Colonic mucosa (tissue), 4 donors: ENCODE measurements at regions of chr4 and their contacts with region 1.

Region 1: GRCh38 chr4:42568610-42569207 is 88.2 kb downstream of the ATP8A1 start:
- DNase-seq: peak; percentile 74
- H3K4me3 ChIP-seq: no peak overlapping the region
- H3K27ac ChIP-seq: no peak overlapping the region
- H3K4me1 ChIP-seq: no peaks in the 10 kb centered on the region
- H3K27me3 ChIP-seq: no peaks in the 10 kb centered on the region
- CTCF ChIP-seq: peak; percentile 63

Region 2: GRCh38 chr4:42501624-42502401 is 66.9 kb before region 1 on chr4:
- intact Hi-C with region 1: no loop called
- DNase-seq: no peak
- H3K4me3 ChIP-seq: no peak overlapping the region
- H3K27ac ChIP-seq: no peak overlapping the region
- H3K4me1 ChIP-seq: no peaks in the 10 kb centered on the region
- H3K27me3 ChIP-seq: no peaks in the 10 kb centered on the region
- CTCF ChIP-seq: no peak

Region 3: DNA sequence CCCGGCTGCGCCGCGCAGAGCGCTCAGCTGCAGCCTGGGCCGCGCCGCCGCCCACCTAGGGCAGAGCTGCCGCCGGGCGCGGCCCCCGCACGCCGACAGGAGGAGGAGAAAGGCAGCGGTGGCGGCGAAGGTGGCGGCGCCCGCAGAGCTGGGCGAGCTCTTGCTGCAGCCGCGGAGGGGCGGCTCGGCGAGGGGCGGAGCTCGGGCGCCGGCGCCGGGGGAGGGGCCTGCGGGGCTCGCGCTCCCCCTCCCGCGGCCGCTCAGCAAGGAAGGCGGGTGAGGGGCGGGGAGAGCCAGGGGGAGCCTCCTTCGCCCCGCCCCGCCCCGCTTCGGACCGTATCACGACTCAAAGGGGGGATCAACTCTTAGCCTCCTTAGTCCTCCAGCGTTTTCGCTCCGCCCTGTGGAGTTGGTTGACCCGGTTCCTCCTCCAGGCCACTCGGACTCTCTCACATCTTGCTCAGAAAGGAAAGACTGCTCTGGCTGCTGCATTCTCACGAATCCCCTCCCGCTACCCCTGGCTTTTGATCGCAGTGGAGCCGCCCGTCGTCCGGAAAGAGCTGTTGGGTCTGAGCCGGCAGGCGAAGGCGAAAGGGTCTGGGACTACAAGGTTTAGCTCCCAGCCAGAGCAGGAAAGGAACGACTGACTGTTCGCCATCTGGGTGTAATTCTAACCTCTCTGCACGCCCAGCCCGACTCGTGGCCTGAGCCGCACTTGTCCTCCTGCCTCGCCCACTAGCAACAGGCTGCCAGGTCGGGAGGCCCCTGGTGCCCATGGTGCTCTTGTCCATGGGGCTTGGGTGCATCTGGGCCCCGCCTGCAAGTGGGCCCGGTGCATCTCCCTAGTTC is 88.5 kb after region 1 on chr4 and contains the start of gene ATP8A1:
- intact Hi-C with region 1: loop called (anchors 10 kb)
- DNase-seq: peak; percentile 94
- H3K4me3 ChIP-seq: peak within 1 kb of the TSS; percentile 82
- H3K27ac ChIP-seq: peak within 1 kb of the TSS; percentile 88
- H3K4me1 ChIP-seq: peaks cover 3% of the 10 kb centered on the region
- H3K27me3 ChIP-seq: no peaks in the 10 kb centered on the region
- CTCF ChIP-seq: no peak
- total RNA-seq, gene ATP8A1: 19.1 to 34.0 TPM

Region 4: DNA sequence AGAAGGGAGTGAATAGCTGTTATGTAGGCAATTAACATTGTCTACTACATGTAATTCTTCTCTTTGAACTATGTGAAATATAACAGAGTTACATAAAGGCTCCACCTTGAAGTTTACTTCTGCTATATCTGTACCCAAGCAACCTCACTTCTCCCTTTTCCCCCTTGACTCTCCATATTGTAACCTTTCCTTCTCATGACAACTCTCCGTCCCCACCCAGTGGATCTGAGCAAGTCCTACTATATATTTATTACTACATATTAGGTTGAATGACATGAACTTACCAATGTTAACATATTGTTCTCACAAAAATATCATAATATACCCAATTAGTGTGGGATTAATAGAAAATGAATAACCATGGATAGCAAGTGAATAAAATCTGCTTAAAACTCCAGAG is 181.4 kb after region 1 on chr4:
- intact Hi-C with region 1: loop called (anchors 10 kb)
- DNase-seq: no peak
- H3K4me3 ChIP-seq: no peak overlapping the region
- H3K27ac ChIP-seq: no peak overlapping the region
- H3K4me1 ChIP-seq: no peaks in the 10 kb centered on the region
- H3K27me3 ChIP-seq: no peaks in the 10 kb centered on the region
- CTCF ChIP-seq: no peak

Region 5: DNA sequence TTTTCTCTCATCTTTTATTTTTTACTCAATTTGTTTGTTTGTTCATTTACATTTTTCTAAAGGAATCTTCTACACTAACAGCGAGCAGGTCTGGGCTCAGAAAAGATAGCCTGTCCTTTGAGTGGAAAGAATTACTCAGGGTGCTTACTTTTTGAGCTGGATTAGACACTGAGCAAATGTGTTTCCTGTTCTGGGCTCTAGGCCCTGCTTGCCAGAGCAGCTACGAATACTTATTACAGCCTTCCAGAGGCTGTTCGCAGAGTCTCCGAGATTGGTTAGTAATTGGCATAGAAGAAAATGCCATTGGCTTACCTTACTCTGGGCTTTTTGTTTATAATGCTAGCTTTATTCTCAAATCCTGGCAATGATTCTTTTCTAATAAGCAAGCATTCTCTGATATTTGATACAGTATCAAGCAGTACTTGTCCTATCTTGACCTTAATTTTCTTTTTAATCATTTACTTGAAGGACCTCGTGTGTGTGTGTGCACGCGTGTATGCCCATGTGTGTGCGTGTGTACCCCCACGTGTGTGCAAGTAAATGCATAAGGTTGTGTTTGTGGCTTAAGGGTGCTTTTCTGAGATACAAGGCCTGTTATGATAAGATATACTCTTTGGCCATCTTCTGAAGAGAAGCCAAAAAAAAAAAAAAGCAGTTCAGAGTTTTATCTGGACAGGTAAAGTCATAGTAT is 247.6 kb after region 1 on chr4:
- intact Hi-C with region 1: loop called (anchors 5 kb)
- DNase-seq: no peak
- H3K4me3 ChIP-seq: no peak overlapping the region
- H3K27ac ChIP-seq: no peak overlapping the region
- H3K4me1 ChIP-seq: no peaks in the 10 kb centered on the region
- H3K27me3 ChIP-seq: no peaks in the 10 kb centered on the region
- CTCF ChIP-seq: no peak

Region 6: GRCh38 chr4:42865572-42866189 is 297.0 kb after region 1 on chr4:
- intact Hi-C with region 1: loop called (anchors 2 kb)
- DNase-seq: peak; percentile 56
- H3K4me3 ChIP-seq: no peak overlapping the region
- H3K27ac ChIP-seq: no peak overlapping the region
- H3K4me1 ChIP-seq: no peaks in the 10 kb centered on the region
- H3K27me3 ChIP-seq: no peaks in the 10 kb centered on the region
- CTCF ChIP-seq: peak; percentile 69